AG04450 (cell line): ENCODE measurements at regions of chr2 and their contacts with region 1.

Region 1: DNA sequence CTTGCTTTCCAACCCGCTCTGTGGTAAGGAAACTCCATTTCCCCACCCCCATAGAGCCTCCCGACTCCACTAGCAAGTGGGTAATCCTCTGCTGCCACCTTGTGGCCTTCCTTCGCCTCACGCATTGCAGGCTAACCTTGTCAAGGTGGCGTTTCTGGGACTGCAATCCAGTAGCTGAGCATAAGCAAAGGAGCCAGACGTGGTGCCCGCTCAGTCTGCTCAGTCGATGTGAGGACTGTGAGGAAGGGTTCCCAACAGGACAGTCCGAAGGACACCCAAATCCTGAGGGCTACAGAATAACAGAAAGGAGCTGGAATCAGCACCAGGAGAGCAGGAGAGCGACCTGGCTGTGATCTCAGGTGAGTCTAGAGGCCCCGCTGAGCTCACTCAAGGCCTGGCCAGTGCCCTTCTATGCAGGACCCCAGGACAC is 144.2 kb downstream of the SUCLG1 start:
- DNase-seq: peak; percentile 45
- H3K4me3 ChIP-seq: no peak overlapping the region
- H3K27ac ChIP-seq: no peak overlapping the region
- H3K27me3 ChIP-seq: peaks cover 5% of the 10 kb centered on the region
- CTCF ChIP-seq: peak; percentile 96

Region 2: DNA sequence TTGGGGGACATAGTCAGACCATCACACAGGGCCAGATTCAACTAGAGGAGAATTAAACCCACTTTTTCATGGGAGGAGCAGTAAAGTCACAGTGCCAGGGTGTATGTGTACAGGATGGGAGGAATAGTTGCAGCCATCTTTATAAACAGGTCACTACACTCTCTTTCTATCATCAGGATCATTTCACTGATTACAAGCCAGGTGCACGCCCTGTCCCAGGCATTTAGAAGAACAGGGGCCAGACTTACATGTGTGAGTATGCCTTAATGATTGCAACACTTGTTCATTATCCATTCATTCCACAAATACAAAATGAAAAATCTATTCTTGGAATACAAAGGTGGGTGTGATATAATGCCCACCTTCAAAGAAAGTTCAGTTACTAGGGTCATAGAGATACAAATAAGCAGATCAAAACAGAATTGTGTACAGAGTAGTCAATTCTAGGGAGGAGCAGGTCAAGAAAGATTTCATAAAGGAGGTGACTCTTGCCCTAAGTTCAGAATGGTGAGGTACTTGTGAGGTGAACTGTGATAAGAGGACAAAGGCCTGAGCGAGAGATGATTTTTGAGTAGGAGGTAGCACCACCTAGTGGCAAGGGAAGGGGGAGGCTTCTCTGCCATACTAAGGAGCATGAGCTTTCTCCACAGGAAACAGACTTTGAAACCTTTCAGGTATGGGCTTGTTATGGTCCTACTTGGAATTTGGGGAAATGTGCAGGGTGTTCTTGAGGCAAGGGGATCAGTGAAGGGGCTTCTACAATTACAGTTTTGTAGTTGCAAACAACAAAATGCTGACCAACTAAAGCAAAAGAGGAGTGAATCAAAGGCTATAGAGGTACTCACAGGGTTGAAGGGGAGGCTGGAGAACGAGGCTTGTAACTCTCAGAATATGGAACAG is 12.2 kb before region 1 on chr2:
- CTCF ChIA-PET with region 1: interaction called, 38 read pairs
- POLR2A ChIA-PET with region 1: no interaction called
- DNase-seq: no peak
- H3K4me3 ChIP-seq: no peak overlapping the region
- H3K27ac ChIP-seq: no peak overlapping the region
- H3K27me3 ChIP-seq: no peaks in the 10 kb centered on the region
- CTCF ChIP-seq: peak; percentile 93

Region 3: GRCh38 chr2:84424152-84424551 is 109.2 kb after region 1 on chr2:
- CTCF ChIA-PET with region 1: interaction called, 22 read pairs
- POLR2A ChIA-PET with region 1: no interaction called
- DNase-seq: no peak
- H3K4me3 ChIP-seq: no peak overlapping the region
- H3K27ac ChIP-seq: no peak overlapping the region
- H3K27me3 ChIP-seq: no peaks in the 10 kb centered on the region
- CTCF ChIP-seq: peak; percentile 67